GM23248 (cell line): ENCODE measurements at regions of chr5 and their contacts with region 1.

Region 1: DNA sequence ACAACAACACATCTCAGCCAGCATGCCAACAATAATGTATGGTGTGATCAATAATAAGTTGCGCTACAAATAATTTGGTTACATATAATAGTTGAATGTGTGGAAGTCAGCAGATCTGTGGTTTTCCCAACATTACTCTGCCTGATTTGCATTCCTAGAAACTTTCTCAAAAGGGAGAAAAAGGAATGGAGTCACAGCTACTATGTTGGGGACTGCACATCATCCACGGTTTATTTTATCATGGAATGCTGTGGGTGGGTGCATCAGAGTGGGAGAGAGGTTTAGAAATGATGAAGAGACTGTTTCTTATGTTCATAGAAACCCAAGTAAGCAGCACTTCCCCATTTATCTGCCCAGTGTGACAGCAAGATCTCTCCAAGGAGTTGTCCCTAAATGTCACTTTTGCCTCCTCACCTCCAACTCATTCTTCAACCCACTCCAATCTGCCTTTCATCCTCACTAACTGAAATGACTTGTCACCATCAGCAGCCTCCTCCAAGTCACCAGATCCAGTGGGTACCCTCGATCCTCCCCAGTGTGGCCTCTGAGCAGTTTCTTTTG is 2.8 kb upstream of the SPOCK1 start:
- DNase-seq: peak; percentile 38
- H3K4me3 ChIP-seq: no peak overlapping the region
- H3K27ac ChIP-seq: no peak overlapping the region
- H3K4me1 ChIP-seq: peaks cover 19% of the 10 kb centered on the region
- H3K27me3 ChIP-seq: no peaks in the 10 kb centered on the region

Region 2: GRCh38 chr5:136295914-136296313 is 1206.0 kb before region 1 on chr5:
- in situ Hi-C with region 1: no loop called
- DNase-seq: peak; percentile 47
- H3K4me3 ChIP-seq: no peak overlapping the region
- H3K27ac ChIP-seq: no peak overlapping the region
- H3K4me1 ChIP-seq: peaks cover 9% of the 10 kb centered on the region; the same call in 1 of the 2 replicates
- H3K27me3 ChIP-seq: no peaks in the 10 kb centered on the region; the same call in 1 of the 2 replicates

Region 3: GRCh38 chr5:136802383-136802782 is 699.5 kb before region 1 on chr5:
- in situ Hi-C with region 1: loop called (anchors 10 kb)
- DNase-seq: peak; percentile 58
- H3K4me3 ChIP-seq: no peak overlapping the region
- H3K27ac ChIP-seq: no peak overlapping the region
- H3K4me1 ChIP-seq: peaks cover 12% of the 10 kb centered on the region
- H3K27me3 ChIP-seq: no peaks in the 10 kb centered on the region

Region 4: DNA sequence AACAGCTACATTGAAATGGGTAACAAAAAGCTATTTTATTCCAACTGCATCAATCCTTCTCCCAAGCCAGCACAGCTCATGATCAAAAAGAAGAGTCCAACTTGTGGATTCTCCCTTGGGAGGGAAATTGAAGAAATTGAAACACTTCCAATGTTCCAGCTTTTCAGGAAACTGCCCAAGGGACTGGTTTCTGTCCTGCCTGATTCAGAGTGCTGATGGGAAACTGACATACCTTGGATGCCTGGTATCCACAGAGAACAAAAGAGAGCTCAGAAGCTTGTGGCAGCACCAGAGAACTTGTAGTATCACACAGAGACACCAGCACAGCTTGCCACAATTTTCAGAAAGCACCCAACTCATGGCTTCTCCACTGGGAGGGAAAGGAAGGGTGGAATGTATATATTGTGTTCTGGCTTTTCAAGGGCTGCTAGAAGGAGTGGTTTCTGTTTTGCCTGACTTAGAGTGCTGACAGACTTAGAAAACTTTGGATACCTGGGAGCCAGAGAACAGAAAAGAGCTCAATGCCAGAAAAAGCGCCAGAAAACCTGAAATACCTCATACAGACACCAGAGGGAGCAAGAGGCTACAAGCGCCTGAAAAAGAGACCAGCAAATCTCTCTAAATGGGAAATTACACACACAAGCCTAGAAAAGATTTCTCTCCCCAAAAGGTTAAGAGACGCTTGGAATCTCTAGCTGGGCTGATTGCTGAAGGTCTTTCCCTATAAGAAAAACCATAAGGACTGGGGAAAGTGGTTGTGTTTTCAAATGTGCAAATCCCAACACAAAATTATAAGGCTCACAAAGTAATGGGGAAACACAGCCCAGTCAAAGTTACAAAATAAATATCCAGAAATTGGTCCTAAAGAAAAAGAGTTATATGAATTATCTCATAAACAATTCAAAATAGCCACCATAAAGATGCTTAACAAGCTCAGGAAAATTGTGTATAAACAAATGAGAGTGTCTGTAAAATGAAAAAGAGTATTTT is 181.6 kb before region 1 on chr5:
- in situ Hi-C with region 1: no loop called
- DNase-seq: peak; percentile 69
- H3K4me3 ChIP-seq: no peak overlapping the region
- H3K27ac ChIP-seq: 0 out of 2 replicates have a peak overlapping the region, but pooled peaks have one; percentile 2
- H3K4me1 ChIP-seq: peaks cover 31% of the 10 kb centered on the region
- H3K27me3 ChIP-seq: no peaks in the 10 kb centered on the region

Region 5: DNA sequence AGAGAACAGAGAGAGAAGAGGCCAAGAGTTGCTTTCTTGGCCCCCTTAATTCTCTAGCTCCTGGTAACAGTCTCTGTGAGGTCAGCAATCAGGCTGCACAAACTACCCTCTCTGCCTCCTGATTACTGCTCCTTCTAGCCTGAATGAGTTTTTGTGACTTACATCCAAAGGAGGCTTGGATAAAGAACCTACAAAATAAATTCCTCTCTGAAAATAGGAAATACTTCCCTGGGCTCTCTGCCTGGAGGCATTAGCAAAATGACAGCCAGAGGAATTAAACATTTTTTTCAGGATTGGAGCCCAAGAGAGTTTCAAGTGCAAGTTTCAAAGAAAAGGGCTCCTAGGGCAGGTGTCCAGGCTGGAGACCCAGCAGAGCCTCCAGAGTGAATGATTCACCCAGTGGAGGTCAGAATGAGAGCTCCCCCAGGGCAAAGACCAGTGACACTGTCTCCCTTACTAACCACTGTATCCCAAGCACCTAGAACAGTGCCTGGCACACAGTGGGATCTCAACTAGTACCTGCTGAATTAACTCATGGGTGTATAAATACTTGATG is 165.3 kb before region 1 on chr5:
- in situ Hi-C with region 1: loop called (anchors 10 kb)
- DNase-seq: no peak
- H3K4me3 ChIP-seq: no peak overlapping the region
- H3K27ac ChIP-seq: no peak overlapping the region
- H3K4me1 ChIP-seq: no peaks in the 10 kb centered on the region; the same call in 1 of the 2 replicates
- H3K27me3 ChIP-seq: no peaks in the 10 kb centered on the region